HCT116 (cell line): ENCODE measurements at regions of chr19 and their contacts with region 1.

Region 1: DNA sequence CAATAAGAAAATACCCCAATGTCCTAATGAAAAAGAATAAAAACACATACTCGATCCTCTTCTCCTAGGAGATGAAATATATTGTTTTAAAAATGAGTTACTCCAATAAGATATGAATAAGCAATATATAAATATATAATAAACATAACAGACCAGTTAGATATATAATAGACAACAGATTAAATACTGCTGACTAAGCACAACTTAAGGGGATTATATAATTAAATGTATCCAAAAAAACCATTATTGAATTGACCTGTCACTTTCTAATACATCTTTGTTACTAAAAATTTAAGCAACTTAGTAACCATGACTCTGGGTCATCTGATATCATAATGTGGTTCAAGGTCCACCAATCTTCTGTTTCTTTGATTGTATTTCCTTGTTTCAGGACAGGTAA is 14.0 kb upstream of the ZNF780B start:
- DNase-seq: no peak
- ATAC-seq: no peak
- H3K4me3 ChIP-seq: no peak overlapping the region
- H3K27ac ChIP-seq: no peak overlapping the region
- H3K4me1 ChIP-seq: no peaks in the 10 kb centered on the region
- H3K27me3 ChIP-seq: no peaks in the 10 kb centered on the region
- CTCF ChIP-seq: no peak
- POLR2A ChIP-seq: no peak
- RAD21 ChIP-seq: no peak

Region 2: GRCh38 chr19:40013991-40014390 is 56.1 kb before region 1 on chr19:
- CTCF ChIA-PET with region 1: no interaction called
- POLR2A ChIA-PET with region 1: no interaction called
- RAD21 ChIA-PET with region 1: no interaction called
- intact Hi-C with region 1: loop called (anchors 5 kb)
- DNase-seq: no peak
- ATAC-seq: no peak
- H3K4me3 ChIP-seq: no peak overlapping the region
- H3K27ac ChIP-seq: no peak overlapping the region
- H3K4me1 ChIP-seq: no peaks in the 10 kb centered on the region
- H3K27me3 ChIP-seq: no peaks in the 10 kb centered on the region
- CTCF ChIP-seq: no peak
- POLR2A ChIP-seq: no peak
- RAD21 ChIP-seq: no peak

Region 3: GRCh38 chr19:40119380-40119779 is 49.3 kb after region 1 on chr19:
- CTCF ChIA-PET with region 1: no interaction called
- POLR2A ChIA-PET with region 1: no interaction called
- RAD21 ChIA-PET with region 1: no interaction called
- intact Hi-C with region 1: no loop called
- DNase-seq: no peak
- ATAC-seq: no peak
- H3K4me3 ChIP-seq: no peak overlapping the region
- H3K27ac ChIP-seq: no peak overlapping the region
- H3K4me1 ChIP-seq: no peaks in the 10 kb centered on the region
- H3K27me3 ChIP-seq: 0 out of 2 replicates have a peak, but pooled peaks cover 11% of the 10 kb centered on the region
- CTCF ChIP-seq: no peak
- POLR2A ChIP-seq: no peak
- RAD21 ChIP-seq: no peak